HepG2 (cell line): ENCODE measurements at regions of chr16 and their contacts with region 1.

Region 1: GRCh38 chr16:2155091-2156021 is at the start of gene TRAF7:
- DNase-seq: peak; percentile 100
- ATAC-seq: peak; percentile 67
- H3K4me3 ChIP-seq: peak within 1 kb of the TSS; percentile 91 to 99 (median 98)
- H3K27ac ChIP-seq: peak within 1 kb of the TSS; percentile 85
- H3K4me1 ChIP-seq: peaks cover 74% of the 10 kb centered on the region
- H3K27me3 ChIP-seq: no peaks in the 10 kb centered on the region; a peak in 1 of 5 replicates
- CTCF ChIP-seq: no peak
- EP300 ChIP-seq: peak; percentile 4 to 14; a peak in 1 of 4 replicates
- POLR2A ChIP-seq: peak; percentile 100
- RAD21 ChIP-seq: peak; percentile 50
- total RNA-seq, gene TRAF7: 40.3 and 47.9 TPM in 2 replicates

Region 2: GRCh38 chr16:1942810-1943726 is 212.3 kb before region 1 on chr16 and contains the start of gene MSRB1:
- CTCF ChIA-PET with region 1: no interaction called
- POLR2A ChIA-PET with region 1: interaction called, 37 read pairs
- in situ Hi-C with region 1: no loop called
- intact Hi-C with region 1: no loop called
- DNase-seq: peak; percentile 98
- ATAC-seq: peak; percentile 56
- H3K4me3 ChIP-seq: peak within 1 kb of the TSS; percentile 93 to 97 (median 96)
- H3K27ac ChIP-seq: peak within 1 kb of the TSS; percentile 96
- H3K4me1 ChIP-seq: peaks cover 68% of the 10 kb centered on the region
- H3K27me3 ChIP-seq: peaks cover 0 to 5% of the 10 kb centered on the region in 2 experiments; a peak in 1 of 5 replicates
- CTCF ChIP-seq: peak; percentile 19; the same call in 1 of the 2 replicates
- EP300 ChIP-seq: no peak
- POLR2A ChIP-seq: peak; percentile 95
- RAD21 ChIP-seq: no peak
- total RNA-seq, gene MSRB1: 32.1 and 49.0 TPM in 2 replicates

Region 3: DNA sequence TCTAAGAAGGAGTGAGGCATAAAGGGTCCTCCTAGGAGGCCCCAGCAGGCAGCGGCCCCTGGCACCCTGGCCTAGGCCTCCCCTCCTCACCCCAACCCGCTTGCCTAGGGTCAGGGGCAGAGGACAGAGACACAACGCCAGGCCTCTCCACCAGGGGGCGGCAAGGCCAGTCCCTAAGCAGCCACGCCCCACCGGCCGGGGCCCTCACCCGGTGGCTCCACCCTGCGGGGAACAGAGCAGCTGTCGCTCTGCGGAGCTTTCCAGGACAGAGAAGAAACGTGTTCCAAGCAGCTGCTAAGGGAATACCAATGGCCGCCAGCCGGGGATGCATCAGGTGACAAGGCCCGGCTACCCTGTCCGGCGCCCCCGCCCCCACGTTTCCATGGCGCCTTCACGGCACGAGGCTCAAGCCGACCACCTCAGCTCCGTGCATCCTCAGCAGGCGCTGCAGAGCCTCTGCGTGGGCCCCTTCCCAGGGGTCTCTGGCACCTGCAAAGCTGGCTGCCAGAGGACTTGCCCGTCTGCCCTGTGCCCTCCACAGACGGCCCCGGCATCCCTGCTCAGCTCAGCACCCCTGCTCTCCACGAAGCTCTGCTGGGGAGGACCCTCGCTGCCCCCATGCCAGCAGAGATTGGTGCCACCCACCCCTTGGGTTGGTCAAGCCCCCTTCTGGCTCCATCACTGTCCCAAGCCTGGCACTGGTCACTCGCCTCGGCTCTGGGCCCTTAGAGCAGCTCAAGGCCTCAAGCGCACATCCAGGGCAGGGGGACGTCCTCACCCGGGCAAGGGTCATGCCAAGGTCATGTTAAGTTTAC is 151.3 kb before region 1 on chr16:
- CTCF ChIA-PET with region 1: no interaction called
- POLR2A ChIA-PET with region 1: interaction called, 18 read pairs
- in situ Hi-C with region 1: no loop called
- intact Hi-C with region 1: no loop called
- DNase-seq: peak; percentile 92
- ATAC-seq: peak; percentile 89
- H3K4me3 ChIP-seq: peak overlapping the region in 1 of 3 experiments; percentile 17; a peak in 1 of 6 replicates
- H3K27ac ChIP-seq: peak overlapping the region; percentile 1
- H3K4me1 ChIP-seq: peaks cover 42% of the 10 kb centered on the region
- H3K27me3 ChIP-seq: no peaks in the 10 kb centered on the region
- CTCF ChIP-seq: peak; percentile 96
- EP300 ChIP-seq: no peak
- POLR2A ChIP-seq: no peak
- RAD21 ChIP-seq: peak; percentile 91

Region 4: GRCh38 chr16:2023098-2023925 is 132.0 kb before region 1 on chr16:
- CTCF ChIA-PET with region 1: no interaction called
- POLR2A ChIA-PET with region 1: interaction called, 8 read pairs
- in situ Hi-C with region 1: no loop called
- intact Hi-C with region 1: loop called (anchors 1 kb)
- DNase-seq: peak; percentile 75
- ATAC-seq: peak; percentile 55
- H3K4me3 ChIP-seq: peak overlapping the region; percentile 42 to 68 (median 49); a peak in 5 of 6 replicates
- H3K27ac ChIP-seq: no peak overlapping the region
- H3K4me1 ChIP-seq: peaks cover 69% of the 10 kb centered on the region
- H3K27me3 ChIP-seq: peaks cover 3 to 29% of the 10 kb centered on the region in 2 experiments; a peak in 4 of 5 replicates
- CTCF ChIP-seq: peak; percentile 99
- EP300 ChIP-seq: no peak
- POLR2A ChIP-seq: peak in 1 of 2 experiments; percentile 78; a peak in 2 of 4 replicates
- RAD21 ChIP-seq: peak; percentile 98

Region 5: DNA sequence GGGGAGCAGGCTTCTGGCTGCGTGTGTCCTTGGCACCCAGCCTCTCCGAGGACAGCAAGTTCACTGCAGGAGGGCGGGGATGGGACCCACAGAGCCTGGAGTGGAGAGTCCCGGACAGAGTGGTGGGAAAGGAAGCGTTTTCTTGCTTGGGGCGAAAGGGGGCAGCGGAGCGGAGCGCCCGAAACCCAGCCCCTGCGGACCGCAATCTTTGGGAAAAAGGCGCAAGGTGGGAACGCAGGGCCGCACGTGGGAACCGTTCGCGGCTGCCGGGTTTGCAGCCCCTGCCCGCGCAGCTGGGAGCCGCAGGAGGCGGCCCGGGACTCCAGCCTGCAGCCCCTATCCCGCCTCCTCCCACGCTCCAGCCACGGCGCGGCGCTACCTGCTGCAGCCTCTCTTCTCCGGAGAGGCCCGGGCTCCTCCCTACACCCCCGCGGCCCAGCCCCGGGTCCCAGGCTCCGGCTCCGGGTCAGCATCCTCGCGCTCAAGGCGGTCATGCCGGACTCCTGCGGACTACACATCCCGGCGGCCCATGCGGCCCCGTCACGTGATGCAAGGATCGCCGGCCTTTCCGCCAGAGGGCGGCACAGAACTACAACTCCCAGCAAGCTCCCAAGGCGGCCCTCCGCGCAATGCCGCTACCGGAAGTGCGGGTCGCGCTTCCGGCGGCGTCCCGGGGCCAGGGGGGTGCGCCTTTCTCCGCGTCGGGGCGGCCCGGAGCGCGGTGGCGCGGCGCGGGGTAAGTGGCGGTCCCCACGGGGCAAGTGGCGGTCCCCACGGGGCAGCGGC is 107.8 kb before region 1 on chr16 and contains the starts of genes NTHL1 and TSC2:
- CTCF ChIA-PET with region 1: no interaction called
- POLR2A ChIA-PET with region 1: interaction called, 11 read pairs
- in situ Hi-C with region 1: no loop called
- intact Hi-C with region 1: no loop called
- DNase-seq: peak; percentile 93
- ATAC-seq: peak; percentile 91
- H3K4me3 ChIP-seq: peak within 1 kb of the TSS; percentile 86 to 95 (median 90)
- H3K27ac ChIP-seq: peak within 1 kb of the TSS; percentile 63
- H3K4me1 ChIP-seq: peaks cover 25% of the 10 kb centered on the region
- H3K27me3 ChIP-seq: peaks cover 0 to 2% of the 10 kb centered on the region in 2 experiments; a peak in 1 of 5 replicates
- CTCF ChIP-seq: peak; percentile 54
- EP300 ChIP-seq: 0 out of 4 replicates have a peak, but pooled peaks of 1 of the 2 experiments have one; percentile 24
- POLR2A ChIP-seq: peak in 1 of 2 experiments; percentile 68; a peak in 1 of 4 replicates
- RAD21 ChIP-seq: peak; percentile 53
- total RNA-seq, gene NTHL1: 64.8 and 64.9 TPM in 2 replicates
- total RNA-seq, gene TSC2: 10.3 and 19.6 TPM in 2 replicates

Region 6: GRCh38 chr16:2090777-2091546 is 64.4 kb before region 1 on chr16:
- CTCF ChIA-PET with region 1: no interaction called
- POLR2A ChIA-PET with region 1: no interaction called
- in situ Hi-C with region 1: no loop called
- intact Hi-C with region 1: no loop called
- DNase-seq: no peak
- ATAC-seq: no peak
- H3K4me3 ChIP-seq: no peak overlapping the region
- H3K27ac ChIP-seq: no peak overlapping the region
- H3K4me1 ChIP-seq: no peaks in the 10 kb centered on the region
- H3K27me3 ChIP-seq: no peaks in the 10 kb centered on the region
- CTCF ChIP-seq: no peak
- EP300 ChIP-seq: no peak
- POLR2A ChIP-seq: no peak
- RAD21 ChIP-seq: no peak

Region 7: DNA sequence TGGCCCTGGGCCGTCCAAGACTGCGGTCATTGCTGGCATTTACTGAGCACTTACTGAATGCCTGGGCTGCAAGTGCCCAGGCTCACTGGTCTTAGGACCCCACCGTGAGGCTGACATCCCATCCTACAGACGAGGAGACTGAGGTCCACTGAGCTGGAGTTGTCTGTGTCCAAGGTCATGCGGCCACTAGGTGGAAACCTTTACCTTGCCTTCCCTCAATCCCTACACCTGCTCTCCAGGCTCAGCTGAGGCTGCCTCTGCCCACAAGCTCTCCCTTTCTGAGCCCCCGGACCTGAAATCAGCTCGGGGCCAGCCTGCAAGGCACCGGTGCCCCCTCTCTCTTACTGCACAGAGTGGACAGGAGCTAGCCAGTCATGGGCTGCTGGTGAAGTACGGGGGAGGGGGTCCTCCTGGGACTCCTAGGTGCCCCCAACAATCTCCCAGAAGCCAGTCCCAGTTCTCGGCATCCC is 39.5 kb after region 1 on chr16:
- CTCF ChIA-PET with region 1: no interaction called
- POLR2A ChIA-PET with region 1: interaction called, 29 read pairs
- in situ Hi-C with region 1: no loop called
- intact Hi-C with region 1: loop called (anchors 5 kb)
- DNase-seq: peak; percentile 67
- ATAC-seq: peak; percentile 68
- H3K4me3 ChIP-seq: peak overlapping the region; percentile 9 to 66 (median 53); a peak in 4 of 6 replicates
- H3K27ac ChIP-seq: no peak overlapping the region
- H3K4me1 ChIP-seq: peaks cover 59% of the 10 kb centered on the region
- H3K27me3 ChIP-seq: peaks cover 2 to 33% of the 10 kb centered on the region in 2 experiments; a peak in 3 of 5 replicates
- CTCF ChIP-seq: peak; percentile 93
- EP300 ChIP-seq: no peak
- POLR2A ChIP-seq: no peak
- RAD21 ChIP-seq: peak; percentile 77

Region 8: GRCh38 chr16:2223375-2224182 is 68.2 kb after region 1 on chr16 and contains the start of gene E4F1:
- CTCF ChIA-PET with region 1: no interaction called
- POLR2A ChIA-PET with region 1: interaction called, 17 read pairs
- in situ Hi-C with region 1: no loop called
- intact Hi-C with region 1: no loop called
- DNase-seq: peak; percentile 97
- ATAC-seq: peak; percentile 84
- H3K4me3 ChIP-seq: peak within 1 kb of the TSS; percentile 78 to 95 (median 79)
- H3K27ac ChIP-seq: peak within 1 kb of the TSS; percentile 80
- H3K4me1 ChIP-seq: peaks cover 46% of the 10 kb centered on the region
- H3K27me3 ChIP-seq: no peaks in the 10 kb centered on the region
- CTCF ChIP-seq: peak; percentile 27; the same call in 1 of the 2 replicates
- EP300 ChIP-seq: no peak
- POLR2A ChIP-seq: peak; percentile 88 to 89
- RAD21 ChIP-seq: no peak
- total RNA-seq, gene E4F1: 10.3 and 19.5 TPM in 2 replicates